SK-N-SH (cell line): ENCODE measurements at regions of chr17 and their contacts with region 1.

Region 1: GRCh38 chr17:30093463-30094147 is 23.0 kb upstream of the NSRP1 start:
- DNase-seq: peak; percentile 76
- H3K4me3 ChIP-seq: peak overlapping the region in 1 of 2 experiments; percentile 30; a peak in 1 of 4 replicates
- H3K27ac ChIP-seq: no peak overlapping the region
- H3K4me1 ChIP-seq: peaks cover 0 to 31% of the 10 kb centered on the region in 2 experiments; a peak in 2 of 4 replicates
- H3K27me3 ChIP-seq: no peaks in the 10 kb centered on the region
- CTCF ChIP-seq: peak; percentile 85
- EP300 ChIP-seq: no peak
- RAD21 ChIP-seq: peak; percentile 94

Region 2: DNA sequence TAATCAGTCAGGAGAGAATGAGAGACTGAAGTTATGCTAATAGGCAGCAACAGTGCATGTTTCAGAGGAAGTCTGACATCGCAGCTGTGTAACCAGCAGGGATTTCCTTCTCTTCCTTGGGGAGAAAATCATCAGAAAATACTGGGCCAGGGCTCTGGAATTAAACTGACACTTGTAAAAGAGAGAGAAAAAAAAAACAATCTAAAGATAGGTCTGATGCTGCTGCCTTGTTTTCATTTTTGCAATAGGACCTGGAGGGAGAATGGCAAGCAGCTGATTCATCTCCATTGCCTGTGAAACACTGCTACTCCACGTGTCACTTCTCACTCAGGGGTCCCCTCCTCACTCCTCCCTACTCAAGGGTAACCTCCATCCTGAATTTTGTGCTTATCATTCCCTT is 453.2 kb before region 1 on chr17:
- CTCF ChIA-PET with region 1: interaction called, 10 read pairs
- POLR2A ChIA-PET with region 1: no interaction called
- DNase-seq: no peak
- H3K4me3 ChIP-seq: no peak overlapping the region
- H3K27ac ChIP-seq: peak overlapping the region; percentile 52 to 89
- H3K4me1 ChIP-seq: peaks cover 54% of the 10 kb centered on the region in 2 experiments; a peak in 3 of 4 replicates
- H3K27me3 ChIP-seq: no peaks in the 10 kb centered on the region
- CTCF ChIP-seq: no peak
- EP300 ChIP-seq: no peak
- RAD21 ChIP-seq: no peak

Region 3: GRCh38 chr17:29807520-29808351 is 285.9 kb before region 1 on chr17:
- CTCF ChIA-PET with region 1: interaction called, 42 read pairs
- POLR2A ChIA-PET with region 1: no interaction called
- DNase-seq: peak; percentile 67
- H3K4me3 ChIP-seq: no peak overlapping the region; a peak in 1 of 4 replicates
- H3K27ac ChIP-seq: peak overlapping the region in 1 of 2 experiments; percentile 61; a peak in 2 of 4 replicates
- H3K4me1 ChIP-seq: peaks cover 3 to 10% of the 10 kb centered on the region in 2 experiments; a peak in 3 of 4 replicates
- H3K27me3 ChIP-seq: no peaks in the 10 kb centered on the region
- CTCF ChIP-seq: peak; percentile 85
- EP300 ChIP-seq: no peak
- RAD21 ChIP-seq: peak; percentile 93

Region 4: GRCh38 chr17:30021708-30022317 is 71.8 kb before region 1 on chr17:
- CTCF ChIA-PET with region 1: interaction called, 58 read pairs
- POLR2A ChIA-PET with region 1: no interaction called
- DNase-seq: peak; percentile 60
- H3K4me3 ChIP-seq: no peak overlapping the region
- H3K27ac ChIP-seq: no peak overlapping the region; a peak in 1 of 4 replicates
- H3K4me1 ChIP-seq: no peaks in the 10 kb centered on the region; a peak in 1 of 4 replicates
- H3K27me3 ChIP-seq: no peaks in the 10 kb centered on the region
- CTCF ChIP-seq: peak; percentile 88
- EP300 ChIP-seq: no peak
- RAD21 ChIP-seq: peak; percentile 76

Region 5: GRCh38 chr17:30041551-30041950 is 52.1 kb before region 1 on chr17:
- CTCF ChIA-PET with region 1: interaction called, 12 read pairs
- POLR2A ChIA-PET with region 1: no interaction called
- DNase-seq: no peak
- H3K4me3 ChIP-seq: no peak overlapping the region
- H3K27ac ChIP-seq: no peak overlapping the region
- H3K4me1 ChIP-seq: no peaks in the 10 kb centered on the region
- H3K27me3 ChIP-seq: no peaks in the 10 kb centered on the region
- CTCF ChIP-seq: no peak
- EP300 ChIP-seq: no peak
- RAD21 ChIP-seq: no peak

Region 6: GRCh38 chr17:30104575-30105339 is 11.2 kb after region 1 on chr17:
- CTCF ChIA-PET with region 1: interaction called, 67 read pairs
- POLR2A ChIA-PET with region 1: no interaction called
- DNase-seq: peak; percentile 79
- H3K4me3 ChIP-seq: peak overlapping the region; percentile 55 to 62
- H3K27ac ChIP-seq: peak overlapping the region; percentile 17 to 95; a peak in 3 of 4 replicates
- H3K4me1 ChIP-seq: peaks cover 0 to 2% of the 10 kb centered on the region in 2 experiments; a peak in 1 of 4 replicates
- H3K27me3 ChIP-seq: no peaks in the 10 kb centered on the region
- CTCF ChIP-seq: peak; percentile 98
- EP300 ChIP-seq: peak in 1 of 2 experiments; percentile 49; a peak in 2 of 4 replicates
- RAD21 ChIP-seq: peak; percentile 90

Region 7: GRCh38 chr17:30148376-30148775 is 54.8 kb after region 1 on chr17:
- CTCF ChIA-PET with region 1: no interaction called
- POLR2A ChIA-PET with region 1: no interaction called
- DNase-seq: no peak
- H3K4me3 ChIP-seq: no peak overlapping the region
- H3K27ac ChIP-seq: no peak overlapping the region
- H3K4me1 ChIP-seq: no peaks in the 10 kb centered on the region
- H3K27me3 ChIP-seq: no peaks in the 10 kb centered on the region
- CTCF ChIP-seq: no peak
- EP300 ChIP-seq: no peak
- RAD21 ChIP-seq: no peak

Region 8: DNA sequence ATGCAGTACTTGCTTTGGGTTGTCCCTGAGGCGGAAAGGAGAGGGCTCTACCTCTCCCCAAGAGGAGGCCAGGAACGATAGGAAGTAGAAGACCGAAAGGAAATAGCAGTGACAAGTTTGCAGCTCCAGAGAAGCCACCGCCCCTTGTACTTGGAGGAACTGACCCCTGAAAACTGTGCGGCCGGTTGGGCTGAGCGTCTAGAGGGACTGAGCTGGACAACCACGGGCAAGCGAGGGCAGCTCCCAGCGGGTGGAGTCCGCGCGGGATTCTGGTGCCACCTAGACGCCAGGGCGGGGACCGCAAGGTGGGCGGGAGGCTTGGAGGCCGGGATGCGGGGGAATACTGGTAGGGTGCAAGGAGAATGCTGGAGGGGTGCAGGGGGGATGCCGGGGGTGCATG is 143.2 kb after region 1 on chr17:
- CTCF ChIA-PET with region 1: interaction called, 10 read pairs
- POLR2A ChIA-PET with region 1: no interaction called
- DNase-seq: peak; percentile 87
- H3K4me3 ChIP-seq: no peak overlapping the region; a peak in 2 of 4 replicates
- H3K27ac ChIP-seq: no peak overlapping the region
- H3K4me1 ChIP-seq: peaks cover 0 to 8% of the 10 kb centered on the region in 2 experiments; a peak in 1 of 4 replicates
- H3K27me3 ChIP-seq: peaks cover 24% of the 10 kb centered on the region
- CTCF ChIP-seq: peak; percentile 29
- EP300 ChIP-seq: no peak
- RAD21 ChIP-seq: peak; percentile 68